Common myeloid progenitor, CD34-positive (primary cell): ENCODE measurements at regions of chr9 and their contacts with region 1.

Region 1: DNA sequence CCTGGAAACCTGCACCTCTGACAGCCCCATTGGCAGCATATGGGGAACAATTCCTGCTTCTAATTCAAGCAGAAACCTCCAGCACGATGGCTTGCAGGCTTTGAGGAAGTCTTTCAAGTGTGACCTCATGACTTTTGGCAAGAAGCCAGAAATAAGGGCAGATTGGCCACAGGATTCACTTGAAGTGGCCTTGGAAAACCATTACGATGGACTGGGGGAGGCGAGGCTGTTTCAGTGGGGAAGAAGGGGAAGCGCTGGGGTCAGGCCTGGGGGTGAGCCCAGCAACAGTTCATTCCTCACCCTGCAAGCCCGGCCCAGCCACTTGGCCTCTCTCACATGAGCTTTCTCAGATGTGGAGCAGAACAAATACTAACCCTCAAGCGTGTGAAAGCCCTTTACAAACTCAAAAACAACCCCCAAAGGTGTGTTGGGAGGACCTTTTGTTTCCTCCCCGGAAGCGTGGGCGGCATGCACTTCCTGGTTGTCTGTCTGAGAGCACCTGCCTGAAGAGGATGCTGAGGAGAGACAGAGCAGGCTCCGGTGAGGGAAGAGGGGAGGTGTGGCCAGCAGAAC is 26.9 kb upstream of the EEIG1 start:
- DNase-seq: peak; percentile 85 to 93 (median 93)
- H3K4me3 ChIP-seq: peak overlapping the region in 1 of 7 experiments; percentile 24
- H3K27ac ChIP-seq: no peak overlapping the region
- H3K4me1 ChIP-seq: peaks cover 5 to 43% (median 32%) of the 10 kb centered on the region in 4 experiments
- H3K27me3 ChIP-seq: no peaks in the 10 kb centered on the region

Region 2: GRCh38 chr9:128020692-128021091 is 13.0 kb after region 1 on chr9:
- CTCF ChIA-PET with region 1: interaction called, 10 read pairs
- POLR2A ChIA-PET with region 1: no interaction called
- DNase-seq: no peak
- H3K4me3 ChIP-seq: no peak overlapping the region
- H3K27ac ChIP-seq: no peak overlapping the region
- H3K4me1 ChIP-seq: peaks cover 0 to 18% (median 9%) of the 10 kb centered on the region in 4 experiments
- H3K27me3 ChIP-seq: no peaks in the 10 kb centered on the region

Region 3: GRCh38 chr9:128026773-128027541 is 19.3 kb after region 1 on chr9:
- CTCF ChIA-PET with region 1: interaction called, 10 read pairs
- POLR2A ChIA-PET with region 1: no interaction called
- DNase-seq: peak in 2 of 3 donors; percentile 49 to 56
- H3K4me3 ChIP-seq: peak overlapping the region in 1 of 7 experiments; percentile 13
- H3K27ac ChIP-seq: peak overlapping the region in 1 of 2 experiments; percentile 50
- H3K4me1 ChIP-seq: peaks cover 8 to 69% (median 51%) of the 10 kb centered on the region in 4 experiments
- H3K27me3 ChIP-seq: no peaks in the 10 kb centered on the region